RWPE1 (cell line): ENCODE measurements at regions of chr2 and their contacts with region 1.

Region 1: DNA sequence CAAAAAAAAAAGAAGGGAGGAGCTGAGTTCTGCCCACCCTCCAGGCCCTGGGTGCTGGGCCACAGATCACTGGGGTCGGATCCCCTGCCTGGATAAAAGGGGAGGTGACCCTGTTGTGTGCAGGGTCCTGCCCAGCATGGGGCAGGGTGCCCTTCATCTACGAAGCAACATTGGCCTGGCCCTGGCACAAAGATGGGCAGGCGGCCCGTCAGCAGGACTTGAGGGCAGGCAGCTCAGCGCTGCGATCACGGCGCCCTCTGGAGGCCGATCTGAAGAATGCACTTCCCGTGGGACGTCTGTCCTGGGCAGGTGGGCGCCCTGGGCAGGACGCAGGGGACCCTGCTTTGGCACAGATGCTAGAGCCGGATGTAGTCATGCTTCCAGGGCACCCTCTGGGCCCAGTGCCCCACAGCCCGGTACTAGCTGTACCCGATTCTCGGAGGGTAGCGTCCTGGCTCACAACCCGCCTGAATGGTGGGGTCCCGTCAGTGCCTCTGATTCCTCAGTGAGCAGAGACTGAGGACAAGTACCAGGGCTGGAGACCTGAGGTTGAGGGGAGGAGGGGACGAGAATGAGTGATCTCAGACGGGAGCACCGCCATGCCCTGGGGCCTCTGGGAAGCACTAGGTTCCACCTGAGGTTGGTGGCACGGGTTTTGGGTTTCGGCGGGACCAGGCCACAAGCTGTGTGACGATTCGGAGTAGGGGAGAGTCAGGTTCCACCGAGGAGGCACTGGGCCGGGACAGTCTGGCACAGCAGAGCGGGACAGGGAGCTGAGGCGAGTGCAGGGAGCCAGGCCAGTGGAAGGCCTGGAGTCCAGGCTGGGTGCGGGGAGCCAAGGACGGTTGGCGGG is 18.0 kb downstream of the ARID5A start:
- DNase-seq: peak; percentile 48
- H3K27ac ChIP-seq: no peak overlapping the region
- CTCF ChIP-seq: peak; percentile 93

Region 2: GRCh38 chr2:96509114-96509846 is 45.2 kb before region 1 on chr2:
- CTCF ChIA-PET with region 1: interaction called, 11 read pairs
- POLR2A ChIA-PET with region 1: no interaction called
- DNase-seq: peak; percentile 84
- H3K27ac ChIP-seq: no peak overlapping the region
- CTCF ChIP-seq: peak; percentile 96

Region 3: GRCh38 chr2:96537066-96537733 is 17.3 kb before region 1 on chr2:
- CTCF ChIA-PET with region 1: interaction called, 21 read pairs
- POLR2A ChIA-PET with region 1: no interaction called
- DNase-seq: no peak
- H3K27ac ChIP-seq: peak overlapping the region; percentile 94
- CTCF ChIP-seq: no peak

Region 4: DNA sequence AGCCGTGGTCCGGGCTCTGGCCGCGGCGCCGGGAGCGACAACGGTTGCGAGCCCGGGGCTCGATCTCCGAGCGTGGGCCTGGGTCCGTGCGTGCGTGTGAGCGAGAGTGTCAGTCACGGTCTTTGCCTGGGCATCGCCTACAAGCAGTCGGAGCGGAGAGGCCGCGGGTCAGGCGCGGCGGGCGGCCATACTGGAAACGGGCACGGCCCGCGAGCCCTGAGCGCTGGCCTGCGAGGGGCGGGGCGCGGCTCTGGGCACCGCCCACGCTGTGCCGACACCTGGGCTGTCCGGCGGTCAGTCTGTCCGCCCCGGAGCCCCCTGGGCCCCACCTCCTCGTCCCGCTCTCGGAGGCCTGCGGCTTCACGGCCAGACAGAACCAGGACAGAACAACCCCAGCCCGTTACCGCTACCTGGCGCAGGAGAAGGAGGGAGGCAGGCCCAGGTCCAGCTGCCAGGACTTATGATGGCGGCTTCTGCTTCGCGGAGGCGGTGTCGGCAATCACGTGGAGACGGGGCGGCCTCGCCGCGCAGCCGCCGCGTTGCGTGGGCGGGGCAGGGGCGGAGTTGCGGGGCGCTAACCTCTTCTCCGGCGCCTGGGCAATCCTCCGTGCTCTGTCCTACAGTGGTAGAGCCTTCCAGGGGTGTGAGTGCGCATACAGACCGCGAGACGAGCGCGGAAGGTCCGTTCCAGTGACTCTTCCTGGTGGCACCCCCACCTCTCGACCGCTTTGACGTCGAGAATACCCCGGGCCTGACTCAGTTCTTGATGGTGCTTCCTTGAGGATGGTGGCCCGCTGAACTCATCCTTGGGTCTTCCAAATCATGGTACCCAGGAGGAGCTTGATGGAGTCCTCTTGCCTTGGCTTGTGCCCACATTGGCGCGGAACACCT is 1441.5 kb after region 1 on chr2 and contains the start of gene TMEM131:
- CTCF ChIA-PET with region 1: no interaction called
- POLR2A ChIA-PET with region 1: no interaction called
- DNase-seq: peak; percentile 93
- H3K27ac ChIP-seq: peak within 1 kb of the TSS; percentile 97
- CTCF ChIP-seq: no peak